Activated T-helper 1 cell treated with anti-CD3 and anti-CD28 coated beads, Interleukin-12 subunit alpha, Interleukin-12 subunit beta, Interleukin-2, Interleukin-4 antibody, amounts not matched to agents 30 ng/mL and 10 ng/mL and 1 ng/mL, durations not matched to agents 14 hours and 24 hours and 36 hours (primary cell): ENCODE measurements at regions of chr1 and their contacts with region 1.

Region 1: GRCh38 chr1:18575620-18576019 is 55.0 kb upstream of the PAX7 start:
- DNase-seq: no peak
- H3K4me3 Mint-ChIP-seq: no peak overlapping the region
- H3K27ac Mint-ChIP-seq: no peak overlapping the region
- H3K4me1 Mint-ChIP-seq: no peaks in the 10 kb centered on the region
- H3K27me3 Mint-ChIP-seq: no peaks in the 10 kb centered on the region

Region 2: DNA sequence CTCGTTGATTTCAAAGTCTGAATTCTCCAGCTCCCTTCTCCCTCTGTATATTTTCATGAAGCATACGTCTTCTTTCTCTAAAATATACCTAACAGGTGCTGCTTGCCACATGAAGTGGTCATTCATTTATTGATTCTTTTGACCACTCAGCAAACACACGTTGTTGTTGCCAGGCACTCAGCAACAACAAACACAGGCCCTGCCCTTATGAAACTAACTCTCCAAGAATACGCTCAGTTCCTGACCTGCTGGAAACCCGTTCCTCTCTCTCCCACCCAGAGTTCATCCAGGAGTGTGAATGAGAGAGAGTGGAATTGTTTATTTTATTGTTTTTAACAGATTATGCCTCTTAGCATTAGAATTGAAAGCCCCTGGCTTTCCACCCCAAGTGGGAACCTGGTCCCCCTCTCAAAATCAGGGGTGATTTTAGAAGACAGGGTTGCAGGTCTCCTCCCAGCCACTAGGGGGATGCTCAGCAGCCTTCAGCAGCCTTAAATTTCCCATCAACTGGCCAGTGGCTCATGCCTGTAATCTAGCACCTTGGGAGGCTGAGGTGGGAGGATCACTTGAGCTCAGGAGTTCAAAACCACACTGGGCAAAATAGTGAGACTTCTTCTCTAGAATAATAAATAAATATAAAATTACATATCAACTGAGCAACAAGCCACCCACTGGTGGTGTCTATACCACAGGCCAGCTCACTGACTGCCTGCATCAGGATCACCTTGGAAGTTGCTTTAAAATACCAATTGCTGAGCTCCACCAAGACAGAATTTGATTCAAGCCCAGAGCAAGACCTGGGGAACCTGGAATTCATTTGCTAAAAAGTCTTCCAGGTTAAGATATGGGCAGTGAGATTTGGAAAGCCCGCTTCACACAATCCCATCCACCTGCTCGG is 275.9 kb before region 1 on chr1:
- intact Hi-C with region 1: loop called (anchors 10 kb)
- DNase-seq: no peak
- H3K4me3 Mint-ChIP-seq: no peak overlapping the region
- H3K27ac Mint-ChIP-seq: no peak overlapping the region
- H3K4me1 Mint-ChIP-seq: no peaks in the 10 kb centered on the region
- H3K27me3 Mint-ChIP-seq: peaks cover 3% of the 10 kb centered on the region